CD8-positive, alpha-beta T cell (primary cell): ENCODE measurements at regions of chr18 and their contacts with region 1.

Region 1: DNA sequence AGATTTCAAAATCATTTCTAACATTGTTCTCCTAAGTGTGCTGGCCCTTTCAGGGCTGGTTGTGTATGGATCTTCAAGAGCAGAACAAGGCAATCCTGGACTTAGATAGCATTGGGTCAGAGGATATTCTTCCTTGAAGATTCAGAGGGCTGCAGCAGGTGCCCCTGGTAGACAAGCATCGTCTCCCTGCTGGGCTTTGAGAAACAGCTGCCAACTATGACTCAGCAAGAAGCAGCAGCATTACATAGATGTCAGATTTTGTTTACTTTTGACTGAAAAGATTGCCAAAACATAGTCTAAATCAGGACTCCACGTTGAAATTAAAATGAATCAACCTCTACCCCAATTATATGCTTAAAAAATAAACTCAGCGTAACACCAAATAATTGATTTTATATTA is 618.8 kb downstream of the SOCS6 start:
- DNase-seq: no peak
- ATAC-seq: no peak
- H3K4me3 ChIP-seq: no peak overlapping the region
- H3K4me3 Mint-ChIP-seq: no peak overlapping the region
- H3K27ac ChIP-seq: no peak overlapping the region
- H3K27ac Mint-ChIP-seq: no peak overlapping the region
- H3K4me1 ChIP-seq: peaks cover 5% of the 10 kb centered on the region
- H3K4me1 Mint-ChIP-seq: peaks cover 16% of the 10 kb centered on the region
- H3K27me3 ChIP-seq: no peaks in the 10 kb centered on the region
- H3K27me3 Mint-ChIP-seq: no peaks in the 10 kb centered on the region
- CTCF ChIP-seq: no peak

Region 2: DNA sequence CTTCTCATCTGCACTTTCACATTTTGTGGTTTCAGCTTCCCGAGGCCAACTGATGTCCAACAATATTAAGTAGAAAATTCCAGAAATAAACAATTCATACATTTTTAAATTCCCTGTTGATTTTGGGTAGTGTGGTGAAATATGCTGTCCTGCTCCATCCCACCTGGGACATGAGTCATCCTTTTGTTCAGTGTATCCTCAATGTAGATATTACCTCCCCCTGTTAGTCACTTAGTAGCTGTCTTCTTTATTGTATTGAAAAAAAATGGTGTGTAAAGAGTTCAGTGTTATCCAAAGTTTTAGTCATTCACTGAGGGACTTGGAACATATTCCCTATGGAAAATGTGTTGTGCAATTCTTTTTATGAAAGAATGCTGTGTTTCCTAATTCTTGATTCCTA is 270.7 kb before region 1 on chr18:
- CTCF ChIA-PET with region 1: no interaction called
- POLR2A ChIA-PET with region 1: no interaction called
- intact Hi-C with region 1: no loop called
- DNase-seq: no peak
- ATAC-seq: no peak
- H3K4me3 ChIP-seq: no peak overlapping the region
- H3K4me3 Mint-ChIP-seq: no peak overlapping the region
- H3K27ac ChIP-seq: no peak overlapping the region
- H3K27ac Mint-ChIP-seq: no peak overlapping the region
- H3K4me1 ChIP-seq: peaks cover 10% of the 10 kb centered on the region
- H3K4me1 Mint-ChIP-seq: peaks cover 33% of the 10 kb centered on the region
- H3K27me3 ChIP-seq: no peaks in the 10 kb centered on the region
- H3K27me3 Mint-ChIP-seq: no peaks in the 10 kb centered on the region
- CTCF ChIP-seq: no peak

Region 3: GRCh38 chr18:70956554-70956953 is 48.9 kb after region 1 on chr18:
- CTCF ChIA-PET with region 1: no interaction called
- POLR2A ChIA-PET with region 1: no interaction called
- intact Hi-C with region 1: loop called in 1 of 2 experiments (anchors 5 kb)
- DNase-seq: no peak
- ATAC-seq: no peak
- H3K4me3 ChIP-seq: no peak overlapping the region
- H3K4me3 Mint-ChIP-seq: no peak overlapping the region
- H3K27ac ChIP-seq: no peak overlapping the region
- H3K27ac Mint-ChIP-seq: no peak overlapping the region
- H3K4me1 ChIP-seq: no peaks in the 10 kb centered on the region
- H3K4me1 Mint-ChIP-seq: no peaks in the 10 kb centered on the region
- H3K27me3 ChIP-seq: no peaks in the 10 kb centered on the region
- H3K27me3 Mint-ChIP-seq: no peaks in the 10 kb centered on the region
- CTCF ChIP-seq: no peak